ENCODE measurements at regions of chr5 and their contacts with region 1.

Region 1: DNA sequence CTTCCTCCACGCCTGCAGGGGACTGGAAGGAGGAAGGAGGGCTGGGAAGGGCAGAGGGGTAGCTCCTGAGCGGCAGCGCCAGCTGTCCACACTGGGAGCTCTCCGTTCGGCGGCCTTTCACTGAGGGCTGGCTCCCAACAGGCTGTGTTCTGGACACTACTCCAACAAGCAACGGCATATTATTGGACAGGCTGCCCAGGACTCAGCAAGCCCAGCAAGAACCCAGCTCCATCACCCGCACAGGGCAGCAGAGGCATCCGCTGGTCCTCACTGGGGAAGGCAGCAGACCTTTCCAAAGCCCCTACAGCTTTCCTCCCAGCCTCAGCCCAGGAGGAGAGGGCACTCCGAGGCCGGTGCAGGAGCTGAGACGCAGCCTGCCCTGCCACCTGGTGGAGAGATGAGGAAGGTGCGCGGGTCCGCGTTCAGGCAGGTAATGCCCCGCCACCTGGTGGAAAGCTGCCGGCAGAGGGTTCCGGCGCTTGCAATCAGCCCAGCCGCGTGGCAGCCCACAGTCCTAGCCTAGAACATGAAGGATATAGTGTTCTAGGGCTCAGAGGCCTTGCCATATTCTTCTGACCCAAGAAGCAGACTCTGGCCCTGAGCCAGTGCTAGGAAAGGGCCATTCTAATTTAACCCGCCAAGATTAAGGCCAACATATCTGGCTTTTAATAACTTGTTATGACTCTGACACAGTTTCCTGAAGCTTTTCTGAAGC is 74.4 kb downstream of the NRG2 start:
- DNase-seq: peak; percentile 52
- ATAC-seq: peak; percentile 99
- H3K4me3 ChIP-seq: no peak overlapping the region
- H3K27ac ChIP-seq: no peak overlapping the region
- H3K4me1 ChIP-seq: no peaks in the 10 kb centered on the region
- H3K27me3 ChIP-seq: peaks cover 39% of the 10 kb centered on the region
- CTCF ChIP-seq: peak; percentile 99
- POLR2A ChIP-seq: no peak
- RAD21 ChIP-seq: peak; percentile 81

Region 2: DNA sequence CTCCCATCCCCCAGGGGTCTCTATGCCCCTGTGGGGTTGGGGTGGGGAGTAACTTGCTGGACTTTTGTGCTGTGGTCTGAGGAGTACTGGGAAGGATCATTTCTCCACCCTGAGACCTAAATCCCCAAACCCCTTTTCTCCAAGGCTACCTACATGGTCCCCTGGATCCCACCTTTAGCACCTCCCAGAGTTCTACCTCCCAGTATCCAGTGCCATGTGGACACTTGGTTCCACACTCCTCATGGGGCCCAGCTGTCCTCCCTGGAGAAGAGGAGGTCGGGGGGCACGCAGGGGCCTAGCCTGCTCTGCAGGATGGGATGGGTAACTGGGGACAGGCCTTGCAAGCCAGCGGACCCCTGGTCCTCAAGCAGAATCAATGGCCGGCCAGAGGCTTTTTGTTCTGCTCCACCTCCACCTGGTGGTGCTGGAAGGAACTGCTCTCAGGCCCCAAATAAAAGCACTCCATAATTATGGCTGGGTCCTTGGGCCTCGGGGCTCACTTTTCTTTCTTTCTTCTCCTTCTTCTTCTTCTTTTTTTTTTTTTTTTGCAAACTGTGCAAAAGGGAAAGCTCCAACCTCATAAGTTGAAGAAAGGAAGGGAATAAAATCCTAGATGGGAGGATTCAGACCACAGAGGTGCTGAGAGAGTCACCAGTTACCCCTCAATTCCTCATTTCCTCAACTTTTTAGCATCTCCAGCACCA is 104.7 kb before region 1 on chr5:
- CTCF ChIA-PET with region 1: interaction called, 3 read pairs
- POLR2A ChIA-PET with region 1: no interaction called
- dilution Hi-C with region 1: no loop called
- in situ Hi-C with region 1: no loop called
- intact Hi-C with region 1: loop called (anchors 5 kb)
- DNase-seq: peak; percentile 41
- ATAC-seq: peak; percentile 94
- H3K4me3 ChIP-seq: no peak overlapping the region
- H3K27ac ChIP-seq: no peak overlapping the region
- H3K4me1 ChIP-seq: no peaks in the 10 kb centered on the region
- H3K27me3 ChIP-seq: peaks cover 68% of the 10 kb centered on the region
- CTCF ChIP-seq: peak; percentile 79
- POLR2A ChIP-seq: no peak
- RAD21 ChIP-seq: peak; percentile 65

Region 3: DNA sequence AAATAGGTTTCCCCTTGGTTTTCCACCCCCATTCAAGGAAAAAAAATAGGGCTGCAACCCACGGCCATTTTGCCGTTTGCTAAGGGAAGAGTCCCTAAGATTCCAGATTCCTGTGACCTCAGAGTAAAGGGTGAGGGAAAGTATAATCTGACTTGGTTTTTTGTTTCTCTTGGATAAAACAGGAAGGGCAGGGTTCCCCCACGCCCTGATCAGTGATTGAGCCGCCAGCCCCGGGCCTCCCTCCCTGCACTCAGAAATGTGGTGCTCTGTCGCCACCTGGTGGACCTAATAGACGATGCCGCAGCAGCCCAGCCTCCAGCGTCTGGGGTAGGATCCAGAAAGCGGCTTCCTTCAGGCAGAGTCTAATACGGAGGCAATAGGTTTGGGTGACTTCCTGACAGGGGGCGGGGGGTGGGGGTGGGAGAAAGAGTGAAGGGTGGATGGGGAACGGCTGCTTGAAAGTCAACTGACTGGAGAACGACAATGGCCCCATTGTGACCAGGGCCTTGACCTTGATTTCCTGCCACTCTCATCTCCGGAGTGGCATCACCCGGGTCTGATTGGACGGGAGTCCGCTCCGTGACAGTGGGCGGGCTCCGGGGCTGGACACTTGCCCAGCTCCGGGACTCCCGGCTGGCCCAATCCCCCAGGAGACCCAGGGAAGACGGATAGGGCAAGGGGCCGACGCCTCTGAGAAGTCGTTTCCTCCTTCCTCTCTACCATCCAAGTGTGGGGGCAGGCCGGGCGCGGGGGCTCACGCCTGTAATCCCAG is 188.5 kb after region 1 on chr5:
- CTCF ChIA-PET with region 1: no interaction called
- POLR2A ChIA-PET with region 1: no interaction called
- dilution Hi-C with region 1: no loop called
- in situ Hi-C with region 1: no loop called
- intact Hi-C with region 1: loop called (anchors 1 kb)
- DNase-seq: peak; percentile 73
- ATAC-seq: peak; percentile 98
- H3K4me3 ChIP-seq: peak overlapping the region; percentile 5; the same call in 1 of the 2 replicates
- H3K27ac ChIP-seq: no peak overlapping the region
- H3K4me1 ChIP-seq: no peaks in the 10 kb centered on the region
- H3K27me3 ChIP-seq: no peaks in the 10 kb centered on the region; the same call in 1 of the 2 replicates
- CTCF ChIP-seq: peak; percentile 97
- POLR2A ChIP-seq: no peak
- RAD21 ChIP-seq: peak; percentile 96

Region 4: GRCh38 chr5:140182803-140183367 is 214.2 kb after region 1 on chr5:
- CTCF ChIA-PET with region 1: no interaction called
- POLR2A ChIA-PET with region 1: no interaction called
- dilution Hi-C with region 1: no loop called
- in situ Hi-C with region 1: no loop called
- intact Hi-C with region 1: no loop called
- DNase-seq: peak; percentile 44
- ATAC-seq: peak; percentile 64
- H3K4me3 ChIP-seq: no peak overlapping the region
- H3K27ac ChIP-seq: no peak overlapping the region
- H3K4me1 ChIP-seq: peaks cover 6% of the 10 kb centered on the region
- H3K27me3 ChIP-seq: no peaks in the 10 kb centered on the region
- CTCF ChIP-seq: no peak
- POLR2A ChIP-seq: no peak
- RAD21 ChIP-seq: no peak

Region 5: DNA sequence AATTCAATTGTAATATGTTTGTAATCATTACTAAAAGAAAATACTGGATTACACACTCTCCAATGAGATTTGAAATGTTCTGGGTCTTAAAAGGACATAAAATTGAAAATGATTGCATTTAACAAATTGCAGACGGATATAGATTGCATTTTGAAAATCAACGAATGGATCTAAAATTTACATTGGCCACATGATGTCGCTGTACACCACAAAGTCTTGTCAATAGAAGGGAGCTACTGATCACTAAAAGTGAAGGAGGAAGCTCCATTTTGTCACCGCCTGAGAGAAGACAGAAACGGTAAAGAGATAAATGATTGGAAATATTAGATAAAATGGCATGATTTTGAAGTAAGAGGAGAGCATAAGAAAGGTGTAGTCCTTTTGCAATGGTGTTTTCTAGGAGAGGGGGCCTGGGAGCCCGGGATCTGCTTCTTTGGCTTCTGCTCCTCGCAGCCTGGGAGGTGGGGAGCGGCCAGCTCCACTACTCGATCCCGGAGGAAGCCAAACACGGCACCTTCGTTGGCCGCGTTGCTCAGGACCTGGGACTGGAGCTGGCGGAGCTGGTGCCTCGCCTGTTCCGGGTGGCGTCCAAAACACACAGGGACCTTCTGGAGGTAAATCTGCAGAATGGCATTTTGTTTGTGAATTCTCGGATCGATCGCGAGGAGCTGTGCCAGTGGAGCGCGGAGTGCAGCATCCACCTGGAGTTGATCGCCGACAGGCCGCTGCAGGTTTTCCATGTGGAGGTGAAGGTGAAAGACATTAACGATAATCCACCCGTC is 817.4 kb after region 1 on chr5 and contains the start of gene PCDHA1:
- CTCF ChIA-PET with region 1: no interaction called
- POLR2A ChIA-PET with region 1: no interaction called
- dilution Hi-C with region 1: no loop called
- in situ Hi-C with region 1: no loop called
- intact Hi-C with region 1: no loop called
- DNase-seq: no peak
- ATAC-seq: no peak
- H3K4me3 ChIP-seq: no peak within 1 kb of the TSS
- H3K27ac ChIP-seq: no peak within 1 kb of the TSS
- H3K4me1 ChIP-seq: no peaks in the 10 kb centered on the region
- H3K27me3 ChIP-seq: no peaks in the 10 kb centered on the region
- CTCF ChIP-seq: no peak
- POLR2A ChIP-seq: no peak
- RAD21 ChIP-seq: no peak
- total RNA-seq, gene PCDHA1: under 0.01 TPM in 1 of 2 replicates, not detected in the other